ENCODE measurements at regions of chr6 and their contacts with region 1.

Region 1: DNA sequence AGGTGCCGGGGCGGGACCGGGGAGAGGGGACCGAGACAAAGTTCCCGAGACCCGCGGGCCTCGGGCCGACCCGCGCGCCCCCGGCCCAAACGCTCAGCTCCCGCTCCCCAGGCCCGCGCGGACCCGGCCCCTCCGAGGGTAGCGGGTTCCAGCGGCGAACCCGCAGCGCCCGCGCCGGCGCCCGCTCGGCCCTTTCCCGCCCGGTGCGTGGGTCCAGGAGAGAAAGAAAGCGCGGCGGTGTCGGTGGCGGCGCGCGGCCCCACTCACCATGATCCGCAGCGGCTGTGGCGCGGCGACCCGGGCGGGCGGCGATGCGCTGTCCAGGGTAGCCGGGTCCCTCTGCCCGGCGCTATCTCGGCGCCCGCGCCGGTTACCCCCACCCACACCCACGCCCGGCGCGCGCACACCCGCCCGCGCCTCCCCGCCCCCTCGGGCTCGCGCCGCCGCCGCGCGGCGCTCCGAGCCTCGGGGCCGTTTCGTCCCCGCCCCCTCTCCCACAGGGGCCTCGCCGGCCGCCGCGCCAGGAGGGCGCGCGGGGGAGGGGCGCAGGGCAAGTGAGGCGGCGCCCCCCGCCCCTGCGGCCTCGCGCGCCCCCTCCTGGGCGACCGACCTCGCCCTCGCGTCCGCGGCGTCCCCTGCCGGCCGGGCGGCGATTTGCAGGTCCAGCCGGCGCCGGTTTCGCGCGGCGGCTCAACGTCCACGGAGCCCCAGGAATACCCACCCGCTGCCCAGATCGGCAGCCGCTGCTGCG is at the start of gene ELOVL2:
- DNase-seq: peak; percentile 95
- H3K4me3 ChIP-seq: peak within 1 kb of the TSS; percentile 62 to 66
- H3K27ac ChIP-seq: no peak within 1 kb of the TSS
- H3K4me1 ChIP-seq: peaks cover 0 to 4% of the 10 kb centered on the region in 2 experiments; a peak in 1 of 4 replicates
- H3K27me3 ChIP-seq: peaks cover 3% of the 10 kb centered on the region; the same call in 1 of the 2 replicates
- CTCF ChIP-seq: peak; percentile 58
- EP300 ChIP-seq: no peak
- RAD21 ChIP-seq: no peak; the same call in 1 of the 2 replicates
- polyA plus RNA-seq, gene ELOVL2: 0.39 and 0.49 TPM in 2 replicates

Region 2: DNA sequence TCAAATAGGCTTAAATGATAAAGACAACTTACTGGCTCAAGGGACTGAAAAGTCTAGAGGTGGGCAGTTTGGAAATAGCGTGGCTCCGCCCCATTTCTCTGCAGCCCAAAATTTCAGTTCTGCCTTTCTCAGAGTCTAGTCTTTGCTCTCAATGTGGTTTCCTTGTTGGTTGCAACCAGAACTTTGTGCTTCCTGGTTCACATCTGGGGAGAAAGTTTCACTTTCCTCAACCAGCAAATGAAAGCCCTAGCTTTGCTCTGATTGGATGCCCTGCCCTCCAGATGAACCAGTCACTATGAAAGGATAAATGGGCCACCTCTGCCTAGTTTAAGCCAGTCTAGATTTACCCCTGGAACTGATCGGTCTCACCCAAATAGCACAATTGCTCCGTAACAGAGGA is 142.4 kb before region 1 on chr6:
- CTCF ChIA-PET with region 1: no interaction called
- POLR2A ChIA-PET with region 1: no interaction called
- DNase-seq: no peak
- H3K4me3 ChIP-seq: no peak overlapping the region
- H3K27ac ChIP-seq: no peak overlapping the region
- H3K4me1 ChIP-seq: no peaks in the 10 kb centered on the region
- H3K27me3 ChIP-seq: no peaks in the 10 kb centered on the region
- CTCF ChIP-seq: no peak
- EP300 ChIP-seq: no peak
- RAD21 ChIP-seq: no peak

Region 3: DNA sequence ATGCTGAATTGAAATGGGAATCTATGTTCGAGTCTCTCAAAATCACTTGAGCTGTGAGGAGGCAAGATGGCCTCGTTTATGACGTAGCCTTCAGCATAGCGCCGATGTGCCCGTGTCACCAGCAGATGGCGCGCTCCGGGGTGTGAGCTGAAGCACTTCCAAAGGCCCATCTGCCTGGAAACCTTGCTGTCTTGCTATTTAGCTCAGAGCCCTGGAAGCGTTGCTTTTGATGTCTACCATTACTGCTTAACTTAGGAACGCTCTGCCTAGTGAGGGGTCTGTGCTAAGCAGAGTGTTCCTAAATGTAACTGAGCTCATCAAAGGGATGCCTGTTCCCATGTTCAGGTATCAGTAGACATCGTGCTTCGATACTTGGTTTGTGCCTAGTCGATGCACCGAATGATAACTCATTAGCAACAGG is 89.5 kb before region 1 on chr6:
- CTCF ChIA-PET with region 1: interaction called, 17 read pairs
- POLR2A ChIA-PET with region 1: no interaction called
- DNase-seq: peak; percentile 60
- H3K4me3 ChIP-seq: peak overlapping the region in 1 of 2 experiments; percentile 12; a peak in 1 of 4 replicates
- H3K27ac ChIP-seq: no peak overlapping the region
- H3K4me1 ChIP-seq: no peaks in the 10 kb centered on the region; a peak in 1 of 4 replicates
- H3K27me3 ChIP-seq: no peaks in the 10 kb centered on the region
- CTCF ChIP-seq: peak; percentile 69
- EP300 ChIP-seq: no peak
- RAD21 ChIP-seq: peak; percentile 64

Region 4: DNA sequence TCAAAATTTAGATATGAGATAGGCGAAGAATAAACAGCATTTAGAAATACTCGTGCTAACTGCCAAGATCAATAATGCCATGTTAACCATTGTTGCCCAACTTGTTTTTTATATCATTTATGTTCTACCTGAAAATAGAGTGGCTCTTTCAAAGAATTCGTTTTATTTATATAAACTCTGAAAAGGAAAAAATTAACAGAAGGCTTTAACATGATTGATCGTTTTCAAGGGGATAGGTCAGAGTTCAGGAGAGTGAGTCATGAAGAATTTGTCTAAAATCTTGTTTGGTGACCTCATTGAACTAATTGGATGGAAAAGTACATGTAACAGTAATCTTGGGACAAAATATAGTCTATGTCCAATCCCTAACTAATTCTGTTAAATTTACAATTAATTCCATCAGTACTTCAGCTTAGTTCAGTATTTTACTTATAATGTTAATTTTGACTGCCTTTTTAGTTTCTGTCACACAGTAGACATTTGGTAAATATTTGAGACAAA is 11.0 kb after region 1 on chr6:
- CTCF ChIA-PET with region 1: interaction called, 10 read pairs
- POLR2A ChIA-PET with region 1: no interaction called
- DNase-seq: no peak
- H3K4me3 ChIP-seq: no peak overlapping the region
- H3K27ac ChIP-seq: no peak overlapping the region
- H3K4me1 ChIP-seq: no peaks in the 10 kb centered on the region
- H3K27me3 ChIP-seq: no peaks in the 10 kb centered on the region
- CTCF ChIP-seq: no peak
- EP300 ChIP-seq: no peak
- RAD21 ChIP-seq: no peak

Region 5: GRCh38 chr6:11097476-11097875 is 53.3 kb after region 1 on chr6:
- CTCF ChIA-PET with region 1: no interaction called
- POLR2A ChIA-PET with region 1: no interaction called
- DNase-seq: no peak
- H3K4me3 ChIP-seq: no peak overlapping the region
- H3K27ac ChIP-seq: no peak overlapping the region
- H3K4me1 ChIP-seq: peaks cover 8 to 10% of the 10 kb centered on the region in 2 experiments; a peak in 3 of 4 replicates
- H3K27me3 ChIP-seq: no peaks in the 10 kb centered on the region
- CTCF ChIP-seq: no peak
- EP300 ChIP-seq: no peak
- RAD21 ChIP-seq: no peak

Region 6: DNA sequence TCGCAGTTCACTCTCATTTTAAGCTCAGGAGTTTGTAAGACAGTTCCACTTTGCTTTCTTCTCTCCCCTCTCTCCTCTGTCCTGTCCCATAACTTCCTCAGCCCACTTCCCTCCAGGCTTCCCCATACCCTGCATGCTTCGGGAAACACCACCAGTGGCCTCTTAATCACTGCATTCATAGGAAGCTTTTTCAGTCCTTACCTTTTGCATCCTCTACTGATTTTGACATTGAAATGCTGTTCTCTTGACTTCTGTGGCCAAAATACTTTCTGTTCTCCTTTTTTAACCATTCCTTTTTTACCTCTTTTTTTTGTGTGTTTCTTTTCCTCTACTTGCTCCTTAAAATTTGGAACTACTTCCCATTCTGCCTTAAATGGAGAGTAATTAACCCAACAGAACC is 1037.6 kb after region 1 on chr6:
- CTCF ChIA-PET with region 1: no interaction called
- POLR2A ChIA-PET with region 1: no interaction called
- DNase-seq: no peak
- H3K4me3 ChIP-seq: no peak overlapping the region
- H3K27ac ChIP-seq: no peak overlapping the region
- H3K4me1 ChIP-seq: peaks cover 5 to 12% of the 10 kb centered on the region in 2 experiments; a peak in 3 of 4 replicates
- H3K27me3 ChIP-seq: no peaks in the 10 kb centered on the region
- CTCF ChIP-seq: no peak
- EP300 ChIP-seq: no peak
- RAD21 ChIP-seq: no peak

Measured in SK-N-SH (cell line).